Heart left ventricle (tissue), 16 donors: ENCODE measurements at regions of chr11 and their contacts with region 1.

Region 1: GRCh38 chr11:21944577-21944976 is 248.3 kb upstream of the ANO5 start:
- DNase-seq: no peak
- ATAC-seq: peak in 1 of 4 donors; percentile 59
- H3K4me3 ChIP-seq: no peak overlapping the region
- H3K27ac ChIP-seq: peak overlapping the region in 2 of 12 donors; percentile 2 to 59
- H3K4me1 ChIP-seq: peaks cover 0 to 5% (median 0%) of the 10 kb centered on the region in 12 donors
- H3K27me3 ChIP-seq: no peaks in the 10 kb centered on the region
- CTCF ChIP-seq: no peak
- POLR2A ChIP-seq: no peak

Region 2: GRCh38 chr11:21817696-21818095 is 126.9 kb before region 1 on chr11:
- intact Hi-C with region 1: no loop called
- DNase-seq: no peak
- ATAC-seq: no peak
- H3K4me3 ChIP-seq: no peak overlapping the region
- H3K27ac ChIP-seq: no peak overlapping the region
- H3K4me1 ChIP-seq: no peaks in the 10 kb centered on the region
- H3K27me3 ChIP-seq: no peaks in the 10 kb centered on the region
- CTCF ChIP-seq: no peak
- POLR2A ChIP-seq: no peak

Region 3: GRCh38 chr11:21965221-21965620 is 20.6 kb after region 1 on chr11:
- intact Hi-C with region 1: loop called in 1 of 10 experiments (anchors 2 kb)
- DNase-seq: no peak
- ATAC-seq: no peak
- H3K4me3 ChIP-seq: no peak overlapping the region
- H3K27ac ChIP-seq: no peak overlapping the region
- H3K4me1 ChIP-seq: no peaks in the 10 kb centered on the region
- H3K27me3 ChIP-seq: no peaks in the 10 kb centered on the region
- CTCF ChIP-seq: no peak
- POLR2A ChIP-seq: no peak

Region 4: DNA sequence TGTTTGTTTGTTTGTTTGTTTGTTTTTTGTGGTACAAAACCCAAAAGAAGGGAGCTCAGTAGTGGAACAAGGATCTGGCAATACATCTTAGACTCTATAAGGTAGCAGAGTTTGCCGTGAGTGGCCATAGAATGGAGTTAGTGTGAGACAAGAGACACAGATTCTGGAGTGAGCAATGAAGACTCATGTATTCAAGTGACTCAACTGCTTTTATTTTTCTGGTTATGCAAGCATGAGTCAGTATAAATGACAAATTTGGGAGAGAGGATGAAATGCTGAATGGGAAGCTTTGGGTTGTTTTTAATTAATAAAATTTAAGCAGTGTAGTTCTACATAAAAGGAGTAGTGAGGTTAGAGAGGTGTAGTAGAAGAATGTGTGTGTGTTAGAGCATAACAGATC is 104.7 kb after region 1 on chr11:
- intact Hi-C with region 1: no loop called
- DNase-seq: no peak
- ATAC-seq: no peak
- H3K4me3 ChIP-seq: no peak overlapping the region
- H3K27ac ChIP-seq: no peak overlapping the region
- H3K4me1 ChIP-seq: no peaks in the 10 kb centered on the region
- H3K27me3 ChIP-seq: no peaks in the 10 kb centered on the region
- CTCF ChIP-seq: no peak
- POLR2A ChIP-seq: no peak